Left cardiac atrium (tissue), 4 donors: ENCODE measurements at regions of chr18 and their contacts with region 1.

Region 1: DNA sequence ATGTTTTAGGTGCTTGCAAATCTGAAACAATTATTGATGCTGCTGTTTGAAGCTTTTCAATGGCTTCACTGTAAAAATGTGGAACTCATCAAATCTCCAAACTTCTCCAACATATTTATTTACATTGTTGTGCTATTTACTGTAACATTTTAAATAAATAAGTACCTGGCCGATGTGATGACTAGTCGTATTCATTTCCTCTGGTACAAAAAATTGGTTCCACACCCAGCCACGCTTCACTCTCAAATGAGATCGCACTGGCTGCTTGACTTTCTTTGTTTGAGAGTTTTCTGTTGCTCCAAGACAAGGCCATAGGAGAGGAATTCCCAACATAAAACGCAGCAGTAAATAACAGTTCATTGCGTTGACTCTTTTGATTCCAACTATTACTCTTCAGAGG is 32.0 kb downstream of the CDH19 start:
- DNase-seq: no peak
- ATAC-seq: no peak

Region 2: DNA sequence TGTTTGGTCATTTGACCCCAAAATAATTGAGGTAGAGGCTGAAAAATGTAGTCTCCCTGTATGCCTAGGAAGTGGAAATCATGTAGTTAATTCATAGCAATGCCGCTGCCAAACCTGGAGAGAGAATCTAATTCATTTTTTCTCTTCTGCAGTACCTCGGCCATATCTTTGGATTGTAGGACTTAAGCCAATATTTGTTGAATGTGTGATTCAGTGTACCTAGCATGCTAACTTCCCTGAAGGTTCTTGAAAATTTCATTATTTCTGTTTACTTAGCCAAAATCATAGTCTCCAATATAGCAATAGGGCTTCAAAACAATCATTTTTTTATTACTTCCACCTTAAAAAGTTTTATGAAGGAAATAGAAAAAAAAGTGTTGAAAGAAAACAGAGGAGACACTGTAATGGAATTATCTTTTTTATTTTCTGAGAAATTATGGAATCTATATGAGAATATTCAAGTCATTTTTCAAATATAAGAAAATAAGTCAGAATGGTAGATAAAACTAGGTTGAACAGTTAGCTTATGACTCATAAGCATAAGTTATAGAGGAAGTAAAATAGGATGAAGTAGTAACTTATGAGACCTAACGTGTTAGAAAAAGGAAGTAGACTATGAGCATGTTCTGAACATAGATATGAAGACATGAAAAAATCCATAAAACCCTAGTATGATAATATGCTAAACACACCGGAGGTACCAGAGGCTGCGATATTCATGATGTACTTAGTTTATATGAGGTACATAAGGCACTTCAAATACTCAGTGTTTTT is 67.2 kb after region 1 on chr18:
- intact Hi-C with region 1: loop called in 1 of 2 experiments (anchors 10 kb)
- DNase-seq: no peak
- ATAC-seq: no peak